Heart left ventricle (tissue), 16 donors: ENCODE measurements at regions of chr7 and their contacts with region 1.

Region 1: DNA sequence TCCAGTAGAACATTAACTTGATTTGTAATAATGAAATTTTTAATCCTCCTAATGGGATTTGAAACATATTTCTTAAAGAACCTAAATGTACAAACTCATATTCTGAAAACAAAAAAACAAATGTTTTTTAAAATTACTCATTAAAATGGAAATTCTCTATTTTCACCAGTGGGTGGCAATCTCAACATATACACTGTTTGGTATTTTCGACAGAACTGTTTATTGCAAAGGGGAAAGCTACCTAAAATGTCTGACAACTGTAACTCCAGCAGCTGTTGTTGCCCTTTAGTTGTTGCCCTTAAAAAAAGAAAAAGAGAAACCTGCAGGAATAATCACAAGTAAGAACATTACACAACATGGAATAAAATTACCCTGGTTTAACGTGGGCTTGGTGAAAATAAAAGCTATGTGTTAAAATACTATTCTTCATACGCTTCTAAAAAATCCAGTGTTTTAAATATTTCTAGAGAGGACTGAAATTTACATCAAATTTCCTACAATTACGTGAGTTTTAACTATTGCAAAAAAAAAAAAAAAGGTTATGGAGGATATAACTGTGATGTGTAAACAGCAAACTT is 54.5 kb downstream of the COL1A2 start:
- DNase-seq: no peak
- ATAC-seq: peak in 1 of 4 donors; percentile 55
- H3K4me3 ChIP-seq: no peak overlapping the region
- H3K27ac ChIP-seq: no peak overlapping the region
- H3K4me1 ChIP-seq: peaks cover 0 to 15% (median 5%) of the 10 kb centered on the region in 12 donors
- H3K27me3 ChIP-seq: peaks cover 0 to 10% (median 0%) of the 10 kb centered on the region in 9 donors
- CTCF ChIP-seq: peak; percentile 42 to 78 (median 59)
- POLR2A ChIP-seq: no peak

Region 2: DNA sequence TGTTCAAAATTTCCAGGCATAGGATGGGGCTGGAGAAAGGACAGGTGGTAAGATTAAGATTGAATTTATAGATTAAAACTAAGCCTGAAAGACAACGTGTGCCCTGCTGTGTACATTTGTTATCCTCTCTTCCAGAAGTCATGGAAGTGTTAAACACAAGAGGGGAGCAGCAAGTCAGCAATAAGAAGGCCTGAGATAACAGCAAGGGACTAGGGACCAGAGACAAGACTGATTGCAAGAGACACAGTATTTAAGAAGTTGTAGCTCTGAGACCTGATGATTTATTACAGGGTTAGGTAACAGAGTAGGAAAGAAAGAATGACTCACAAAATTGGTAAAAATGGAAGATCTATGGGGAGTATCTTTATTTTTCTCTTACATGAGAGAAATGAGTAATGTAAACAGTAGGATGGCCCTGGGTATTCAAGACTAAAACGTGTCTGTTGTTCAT is 110.3 kb before region 1 on chr7:
- intact Hi-C with region 1: no loop called
- DNase-seq: no peak
- ATAC-seq: no peak
- H3K4me3 ChIP-seq: no peak overlapping the region
- H3K27ac ChIP-seq: no peak overlapping the region
- H3K4me1 ChIP-seq: no peaks in the 10 kb centered on the region
- H3K27me3 ChIP-seq: no peaks in the 10 kb centered on the region
- CTCF ChIP-seq: no peak
- POLR2A ChIP-seq: no peak

Region 3: GRCh38 chr7:94509879-94510581 is 60.8 kb after region 1 on chr7:
- intact Hi-C with region 1: loop called in 3 of 10 experiments (anchors 2 to 5 kb)
- DNase-seq: peak; percentile 66 to 83 (median 72)
- ATAC-seq: peak; percentile 66 to 91 (median 88)
- H3K4me3 ChIP-seq: peak overlapping the region; percentile 78 to 98 (median 90)
- H3K27ac ChIP-seq: peak overlapping the region; percentile 89 to 98 (median 93)
- H3K4me1 ChIP-seq: peaks cover 0 to 49% (median 26%) of the 10 kb centered on the region in 12 donors
- H3K27me3 ChIP-seq: no peaks in the 10 kb centered on the region
- CTCF ChIP-seq: peak in 9 of 12 donors; percentile 9 to 52 (median 28)
- POLR2A ChIP-seq: peak in 1 of 2 donors; percentile 41

Region 4: DNA sequence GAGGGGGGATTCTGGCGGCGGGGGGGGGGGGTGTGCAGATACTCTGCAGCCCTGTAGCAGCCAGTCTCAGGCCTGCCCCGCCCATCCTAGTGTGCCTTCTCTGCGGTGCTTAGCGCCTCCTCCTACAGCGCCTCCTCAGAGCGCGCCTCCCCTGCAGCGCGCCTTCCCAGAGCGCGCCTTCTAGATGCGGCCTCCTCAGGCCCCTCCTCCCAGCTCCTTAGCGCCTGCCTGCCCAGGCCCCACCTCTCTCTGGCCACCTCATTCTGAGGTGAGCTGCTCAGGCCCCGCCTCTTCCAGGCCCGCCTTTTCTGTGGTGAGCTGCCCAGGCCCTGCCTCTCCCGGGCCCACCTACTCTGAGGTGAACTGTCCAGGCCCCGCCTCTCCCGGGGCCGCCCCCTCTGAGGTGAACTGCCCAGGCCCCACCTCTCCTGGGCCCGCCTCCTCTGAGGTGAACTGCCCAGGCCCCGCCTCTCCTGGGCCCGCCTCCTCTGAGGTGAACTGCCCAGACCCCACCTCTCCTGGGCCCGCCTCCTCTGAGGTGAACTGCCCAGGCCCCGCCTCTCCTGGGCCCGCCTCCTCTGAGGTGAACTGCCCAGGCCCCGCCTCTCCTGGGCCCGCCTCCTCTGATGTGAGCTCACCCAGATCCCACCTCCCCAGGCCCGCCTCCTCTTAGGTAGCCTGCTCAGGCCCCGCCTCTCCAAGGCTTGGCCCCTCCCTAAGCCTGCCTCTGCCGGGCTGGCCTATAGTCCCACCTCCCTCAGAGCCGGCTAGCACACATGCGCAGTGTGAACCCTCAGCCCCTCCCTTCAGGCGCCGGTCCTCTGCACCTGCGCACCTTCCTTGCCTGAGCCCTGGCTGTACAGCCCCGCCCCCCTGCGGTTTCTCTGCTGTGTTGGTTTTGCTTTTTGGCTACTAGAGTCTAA is 208.8 kb after region 1 on chr7:
- intact Hi-C with region 1: loop called in 6 of 10 experiments (anchors 5 to 10 kb)
- DNase-seq: peak; percentile 86 to 94 (median 94)
- ATAC-seq: peak; percentile 94 to 97 (median 95)
- H3K4me3 ChIP-seq: peak overlapping the region; percentile 23 to 79 (median 72)
- H3K27ac ChIP-seq: peak overlapping the region in 7 of 12 donors; percentile 11 to 78 (median 44)
- H3K4me1 ChIP-seq: peaks cover 0 to 30% (median 5%) of the 10 kb centered on the region in 12 donors
- H3K27me3 ChIP-seq: peaks cover 0 to 31% (median 4%) of the 10 kb centered on the region in 9 donors
- CTCF ChIP-seq: no peak
- POLR2A ChIP-seq: peak in 1 of 2 donors; percentile 15

Region 5: GRCh38 chr7:95240921-95241320 is 791.7 kb after region 1 on chr7:
- intact Hi-C with region 1: loop called in 8 of 10 experiments (anchors 5 to 10 kb)
- DNase-seq: no peak
- ATAC-seq: no peak
- H3K4me3 ChIP-seq: no peak overlapping the region
- H3K27ac ChIP-seq: no peak overlapping the region
- H3K4me1 ChIP-seq: no peaks in the 10 kb centered on the region
- H3K27me3 ChIP-seq: no peaks in the 10 kb centered on the region
- CTCF ChIP-seq: no peak
- POLR2A ChIP-seq: no peak

Region 6: GRCh38 chr7:95476904-95477594 is 1027.8 kb after region 1 on chr7:
- intact Hi-C with region 1: loop called in 8 of 10 experiments (anchors 5 to 10 kb)
- DNase-seq: peak in 4 of 5 donors; percentile 36 to 59 (median 50)
- ATAC-seq: peak in 3 of 4 donors; percentile 58 to 77 (median 62)
- H3K4me3 ChIP-seq: no peak overlapping the region
- H3K27ac ChIP-seq: no peak overlapping the region
- H3K4me1 ChIP-seq: peaks cover 0 to 9% (median 0%) of the 10 kb centered on the region in 12 donors
- H3K27me3 ChIP-seq: no peaks in the 10 kb centered on the region
- CTCF ChIP-seq: peak; percentile 63 to 84 (median 78)
- POLR2A ChIP-seq: no peak